KBM-7 (cell line): ENCODE measurements at regions of chr9 and their contacts with region 1.

Region 1: DNA sequence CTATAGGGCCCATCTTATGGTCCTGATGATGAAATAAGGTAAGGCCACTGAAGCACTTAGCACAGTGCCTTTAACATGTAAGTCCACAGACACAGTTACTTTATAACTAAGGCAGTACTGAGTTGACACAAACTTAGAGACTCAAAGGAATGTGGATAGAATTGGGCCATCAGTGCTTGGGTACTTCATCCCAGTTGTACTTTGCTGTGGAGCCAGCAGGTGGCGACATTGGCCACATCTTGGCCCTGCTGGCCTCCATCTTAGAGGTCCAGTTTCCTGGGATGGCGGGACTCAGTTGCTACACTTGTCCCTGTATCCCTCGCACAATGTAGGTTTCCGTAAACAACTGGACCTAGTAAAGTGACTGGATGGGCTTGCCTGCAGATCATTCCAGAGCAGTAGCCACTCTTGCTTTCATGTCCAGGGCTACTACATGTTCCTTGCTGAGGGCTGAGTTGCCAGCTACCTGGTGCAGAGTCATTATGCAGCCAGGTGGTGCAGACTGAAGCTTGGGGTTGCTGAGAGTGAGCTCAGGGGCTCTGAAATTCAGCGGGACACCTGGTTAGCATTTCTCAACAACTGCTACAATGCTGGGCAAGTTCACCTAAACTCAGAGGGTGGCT is 10.6 kb downstream of the MTAP start:
- DNase-seq: peak; percentile 81

Region 2: DNA sequence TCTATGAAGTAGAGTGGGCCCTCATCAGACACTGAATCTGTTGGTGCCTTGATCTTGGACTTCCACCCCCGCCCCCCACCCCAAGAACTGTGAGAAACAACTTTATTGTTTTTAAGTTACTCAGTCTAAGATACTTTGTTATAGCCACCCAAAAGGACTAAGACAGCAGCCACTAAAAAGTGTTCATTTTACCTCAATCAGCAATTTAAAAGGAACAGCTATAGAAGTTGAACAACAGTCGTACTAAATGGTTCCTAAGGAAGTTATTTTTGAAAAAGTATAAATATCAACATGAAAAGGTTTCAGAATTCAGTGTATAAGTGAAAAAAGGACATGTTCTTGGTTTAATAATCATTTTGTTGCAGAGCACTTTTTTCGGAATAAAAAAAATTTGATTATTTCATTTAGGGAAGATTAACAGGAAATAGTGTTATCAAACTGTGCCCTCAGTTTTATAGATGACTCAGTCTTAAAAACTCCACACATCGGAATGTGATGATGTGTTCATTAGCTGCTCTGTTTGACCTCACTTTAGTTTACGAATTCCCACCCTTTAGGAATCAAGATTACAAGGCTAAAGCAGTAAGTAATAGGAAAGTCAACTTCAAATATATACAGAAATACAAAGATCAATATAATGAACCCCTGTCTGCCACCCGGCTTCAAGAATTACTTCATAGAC is 60.6 kb after region 1 on chr9:
- in situ Hi-C with region 1: no loop called
- DNase-seq: no peak

Region 3: DNA sequence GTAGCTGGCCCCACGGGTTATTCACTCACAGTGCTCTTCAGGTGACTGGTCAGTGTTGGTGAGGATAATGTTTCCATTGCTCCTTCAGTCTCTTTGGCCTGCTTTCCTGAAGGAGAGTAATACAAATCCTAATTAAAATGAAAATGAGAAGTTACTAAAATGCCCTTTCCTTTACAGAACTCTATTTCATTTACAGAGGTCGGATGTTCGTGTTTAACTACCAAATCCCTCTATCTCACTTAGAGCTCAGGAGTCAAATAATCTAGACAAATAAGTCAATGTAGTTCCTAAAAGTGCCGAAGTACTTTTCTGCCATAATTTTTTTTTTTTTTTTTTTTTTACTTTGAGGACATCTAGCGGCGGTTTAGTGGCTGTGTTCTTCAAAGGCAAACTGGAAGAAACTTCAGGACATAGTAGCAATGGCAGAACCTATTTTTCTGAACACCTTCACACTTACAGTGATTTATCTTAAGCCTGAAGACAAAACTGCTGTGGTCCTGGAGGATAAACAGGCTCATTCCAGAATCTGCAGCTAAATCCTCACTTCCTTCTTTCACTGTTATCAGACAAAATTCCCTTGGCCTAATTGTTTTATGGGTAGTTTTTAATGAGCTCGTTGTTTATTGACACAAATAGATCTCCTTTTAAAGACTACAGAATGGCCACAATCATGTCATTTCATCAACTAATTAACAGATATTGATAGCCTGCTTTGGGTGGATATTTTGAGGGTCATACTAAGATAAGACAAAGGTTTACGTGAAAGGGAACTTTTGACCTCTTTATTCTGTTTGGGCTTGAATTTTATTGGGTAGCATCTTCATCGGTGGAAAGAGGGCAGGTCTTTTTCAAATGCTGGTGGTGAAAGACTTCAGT is 426.0 kb after region 1 on chr9:
- in situ Hi-C with region 1: loop called (anchors 10 kb)
- DNase-seq: peak; percentile 81